ENCODE measurements at regions of chr2 and their contacts with region 1.

Region 1: DNA sequence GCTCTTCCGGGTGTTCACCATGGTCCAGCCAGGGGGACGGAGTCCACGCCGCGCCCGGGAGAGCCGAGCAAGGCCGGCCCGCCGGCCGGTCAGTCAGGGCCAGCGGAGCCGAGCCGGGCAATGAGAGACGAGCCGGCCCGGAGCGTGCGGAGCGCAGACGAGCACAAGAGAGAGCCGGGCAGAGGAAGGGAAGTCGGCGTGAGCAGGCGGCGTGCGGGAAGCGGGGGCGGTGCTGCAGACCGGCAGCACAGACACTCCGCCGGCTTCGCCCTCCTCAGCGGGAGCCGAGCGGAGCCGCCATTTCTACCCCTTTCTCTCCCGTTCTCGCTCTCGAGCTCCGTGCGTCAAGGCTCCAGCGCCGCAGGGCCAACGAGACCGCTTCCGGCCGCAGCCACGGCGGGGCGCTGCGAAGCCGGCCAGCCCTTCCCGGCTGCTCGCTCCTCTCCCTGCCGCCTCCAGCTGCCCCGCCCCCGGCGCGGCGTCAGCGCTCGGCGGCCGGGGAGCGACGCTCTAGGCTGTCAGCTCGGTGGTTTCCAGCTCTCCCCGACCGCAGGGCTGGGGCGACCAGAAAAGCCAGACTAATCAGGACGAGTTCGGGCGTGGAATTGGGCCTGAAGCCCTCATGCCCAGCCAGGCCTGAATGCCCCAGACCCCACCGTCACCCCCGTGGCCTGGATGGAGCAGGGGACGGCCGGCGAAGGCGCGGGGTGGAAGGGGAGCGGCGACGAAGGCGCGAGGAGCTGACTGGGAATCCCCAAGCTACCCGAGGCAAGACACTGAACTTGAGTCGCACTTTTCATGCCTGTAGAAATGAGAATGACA is at the start of gene ATAD2B:
- DNase-seq: peak; percentile 89
- ATAC-seq: peak; percentile 83
- H3K4me3 ChIP-seq: peak within 1 kb of the TSS; percentile 89
- H3K27ac ChIP-seq: peak within 1 kb of the TSS; percentile 99
- H3K4me1 ChIP-seq: peaks cover 9% of the 10 kb centered on the region
- H3K27me3 ChIP-seq: no peaks in the 10 kb centered on the region
- CTCF ChIP-seq: peak; percentile 80 to 93 (median 93); a peak in 5 of 6 replicates
- EP300 ChIP-seq: peak; percentile 13 to 14; a peak in 1 of 4 replicates
- POLR2A ChIP-seq: peak; percentile 94
- RAD21 ChIP-seq: peak; percentile 68
- polyA plus RNA-seq, gene ATAD2B: 3.6 to 5.4 TPM

Region 2: GRCh38 chr2:23301136-23301535 is 625.8 kb before region 1 on chr2:
- CTCF ChIA-PET with region 1: no interaction called
- POLR2A ChIA-PET with region 1: no interaction called
- RAD21 ChIA-PET with region 1: no interaction called
- SMC1A ChIA-PET with region 1: no interaction called
- in situ Hi-C with region 1: no loop called
- intact Hi-C with region 1: no loop called
- DNase-seq: no peak
- ATAC-seq: no peak
- H3K4me3 ChIP-seq: no peak overlapping the region
- H3K27ac ChIP-seq: no peak overlapping the region
- H3K4me1 ChIP-seq: no peaks in the 10 kb centered on the region
- H3K27me3 ChIP-seq: peaks cover 4 to 6% of the 10 kb centered on the region in 2 experiments; a peak in 2 of 4 replicates
- CTCF ChIP-seq: no peak
- EP300 ChIP-seq: no peak
- POLR2A ChIP-seq: no peak
- RAD21 ChIP-seq: no peak

Region 3: GRCh38 chr2:23850564-23851256 is 76.3 kb before region 1 on chr2:
- CTCF ChIA-PET with region 1: interaction called, 14 read pairs
- POLR2A ChIA-PET with region 1: interaction called, 8 read pairs
- RAD21 ChIA-PET with region 1: interaction called, 18 read pairs
- SMC1A ChIA-PET with region 1: interaction called, 17 read pairs
- in situ Hi-C with region 1: no loop called
- intact Hi-C with region 1: no loop called
- DNase-seq: peak; percentile 53
- ATAC-seq: peak; percentile 97
- H3K4me3 ChIP-seq: no peak overlapping the region; the same call in 1 of the 2 replicates
- H3K27ac ChIP-seq: peak overlapping the region; percentile 87
- H3K4me1 ChIP-seq: peaks cover 29% of the 10 kb centered on the region
- H3K27me3 ChIP-seq: no peaks in the 10 kb centered on the region
- CTCF ChIP-seq: no peak
- EP300 ChIP-seq: peak in 1 of 2 experiments; percentile 81; a peak in 2 of 4 replicates
- POLR2A ChIP-seq: no peak
- RAD21 ChIP-seq: no peak

Region 4: DNA sequence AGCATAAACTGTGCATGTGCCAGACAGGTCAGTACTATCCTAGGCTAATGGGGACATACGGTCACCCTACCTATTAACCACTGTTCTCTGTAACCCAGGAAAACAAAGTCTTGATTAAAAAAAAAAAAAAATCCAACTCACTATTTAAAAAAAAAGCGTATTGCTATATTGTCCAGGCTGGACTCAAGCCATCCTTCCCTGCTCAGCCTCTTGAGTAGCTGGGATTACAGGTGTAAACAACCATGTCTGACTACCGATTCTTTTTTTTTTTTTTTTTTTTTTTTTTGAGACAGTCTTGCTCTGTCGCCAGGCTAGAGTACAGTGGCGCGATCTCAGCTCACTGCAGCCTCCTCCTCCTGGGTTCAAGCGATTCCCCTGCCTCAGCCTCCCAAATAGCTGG is 11.6 kb before region 1 on chr2:
- CTCF ChIA-PET with region 1: interaction called, 5 read pairs
- POLR2A ChIA-PET with region 1: interaction called, 5 read pairs
- RAD21 ChIA-PET with region 1: interaction called, 10 read pairs
- SMC1A ChIA-PET with region 1: interaction called, 5 read pairs
- in situ Hi-C with region 1: no loop called
- intact Hi-C with region 1: no loop called
- DNase-seq: no peak
- ATAC-seq: no peak
- H3K4me3 ChIP-seq: no peak overlapping the region
- H3K27ac ChIP-seq: no peak overlapping the region
- H3K4me1 ChIP-seq: peaks cover 7% of the 10 kb centered on the region
- H3K27me3 ChIP-seq: no peaks in the 10 kb centered on the region
- CTCF ChIP-seq: no peak
- EP300 ChIP-seq: no peak
- POLR2A ChIP-seq: no peak
- RAD21 ChIP-seq: no peak

Region 5: GRCh38 chr2:24046930-24047702 is 120.2 kb after region 1 on chr2 and contains the start of gene WDCP:
- CTCF ChIA-PET with region 1: interaction called, 26 read pairs
- POLR2A ChIA-PET with region 1: interaction called, 9 read pairs
- RAD21 ChIA-PET with region 1: interaction called, 31 read pairs
- SMC1A ChIA-PET with region 1: interaction called, 14 read pairs
- in situ Hi-C with region 1: no loop called
- intact Hi-C with region 1: loop called (anchors 5 kb)
- DNase-seq: peak; percentile 97
- ATAC-seq: peak; percentile 100
- H3K4me3 ChIP-seq: peak within 1 kb of the TSS; percentile 78
- H3K27ac ChIP-seq: peak within 1 kb of the TSS; percentile 20; the same call in 1 of the 2 replicates
- H3K4me1 ChIP-seq: peaks cover 11% of the 10 kb centered on the region
- H3K27me3 ChIP-seq: peaks cover 0 to 5% of the 10 kb centered on the region in 2 experiments; a peak in 3 of 4 replicates
- CTCF ChIP-seq: no peak
- EP300 ChIP-seq: no peak
- POLR2A ChIP-seq: peak; percentile 94
- RAD21 ChIP-seq: no peak
- polyA plus RNA-seq, gene WDCP: 5.5 to 6.1 TPM

Region 6: GRCh38 chr2:24075915-24076848 is 149.2 kb after region 1 on chr2 and contains the start of gene SF3B6:
- CTCF ChIA-PET with region 1: interaction called, 34 read pairs
- POLR2A ChIA-PET with region 1: interaction called, 16 read pairs
- RAD21 ChIA-PET with region 1: interaction called, 45 read pairs
- SMC1A ChIA-PET with region 1: interaction called, 24 read pairs
- in situ Hi-C with region 1: no loop called
- intact Hi-C with region 1: loop called (anchors 2 kb)
- DNase-seq: peak; percentile 98
- ATAC-seq: peak; percentile 95
- H3K4me3 ChIP-seq: peak within 1 kb of the TSS; percentile 89
- H3K27ac ChIP-seq: peak within 1 kb of the TSS; percentile 85
- H3K4me1 ChIP-seq: peaks cover 9% of the 10 kb centered on the region
- H3K27me3 ChIP-seq: no peaks in the 10 kb centered on the region
- CTCF ChIP-seq: no peak
- EP300 ChIP-seq: peak in 1 of 2 experiments; percentile 27; a peak in 1 of 4 replicates
- POLR2A ChIP-seq: peak; percentile 94
- RAD21 ChIP-seq: no peak
- polyA plus RNA-seq, gene SF3B6: 538 to 584 TPM

Region 7: DNA sequence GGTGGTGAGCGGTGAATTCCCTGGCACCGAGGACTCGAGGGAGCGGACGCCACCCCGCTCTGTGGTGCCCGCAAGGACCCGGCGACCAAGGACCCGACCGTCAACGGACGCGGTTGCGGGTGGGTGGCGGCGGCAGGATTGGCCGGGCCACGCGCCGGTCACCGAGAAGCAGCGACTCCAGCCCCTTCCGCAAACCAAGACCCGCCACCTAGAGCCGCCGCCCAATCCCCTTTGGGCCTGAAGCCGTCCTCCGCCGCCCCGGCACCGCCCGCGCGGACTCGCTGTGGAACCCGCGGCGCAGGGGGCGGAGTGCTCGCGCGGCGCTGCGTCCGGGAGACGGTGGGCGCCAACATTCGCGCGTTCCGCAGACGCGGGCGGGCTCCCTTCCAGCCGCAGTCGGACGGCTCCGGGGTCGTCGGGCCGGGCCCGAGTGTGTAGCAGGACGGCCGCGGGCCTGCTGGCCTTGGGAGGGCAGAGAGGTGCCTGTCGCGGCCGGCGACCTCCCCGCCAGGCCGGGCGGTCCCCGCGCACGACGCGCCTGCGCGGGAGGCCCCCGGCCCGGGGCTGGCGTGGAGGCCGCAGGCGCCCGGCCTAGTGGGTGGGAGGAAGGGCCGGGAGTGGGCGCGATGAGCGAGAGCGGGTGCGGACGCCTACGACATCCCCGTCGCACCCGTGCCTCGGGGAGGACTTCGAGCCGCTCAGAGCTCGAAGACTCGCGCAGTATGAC is 196.4 kb after region 1 on chr2 and contains the starts of genes FAM228B and PFN4:
- CTCF ChIA-PET with region 1: interaction called, 3 read pairs
- POLR2A ChIA-PET with region 1: interaction called, 5 read pairs
- RAD21 ChIA-PET with region 1: interaction called, 8 read pairs
- SMC1A ChIA-PET with region 1: interaction called, 5 read pairs
- in situ Hi-C with region 1: no loop called
- intact Hi-C with region 1: loop called (anchors 2 kb)
- DNase-seq: peak; percentile 41
- ATAC-seq: peak; percentile 98
- H3K4me3 ChIP-seq: peak within 1 kb of the TSS; percentile 82
- H3K27ac ChIP-seq: peak within 1 kb of the TSS; percentile 90
- H3K4me1 ChIP-seq: no peaks in the 10 kb centered on the region
- H3K27me3 ChIP-seq: no peaks in the 10 kb centered on the region
- CTCF ChIP-seq: no peak
- EP300 ChIP-seq: no peak
- POLR2A ChIP-seq: peak; percentile 95
- RAD21 ChIP-seq: no peak
- polyA plus RNA-seq, gene FAM228B: 5.1 to 5.8 TPM
- polyA plus RNA-seq, gene PFN4: 0.14 to 0.38 TPM

Region 8: GRCh38 chr2:24342110-24342910 is 415.3 kb after region 1 on chr2:
- CTCF ChIA-PET with region 1: interaction called, 7 read pairs
- POLR2A ChIA-PET with region 1: no interaction called
- RAD21 ChIA-PET with region 1: interaction called, 18 read pairs
- SMC1A ChIA-PET with region 1: no interaction called
- in situ Hi-C with region 1: no loop called
- intact Hi-C with region 1: no loop called
- DNase-seq: peak; percentile 68
- ATAC-seq: peak; percentile 81
- H3K4me3 ChIP-seq: peak overlapping the region; percentile 9; the same call in 1 of the 2 replicates
- H3K27ac ChIP-seq: peak overlapping the region; percentile 71
- H3K4me1 ChIP-seq: peaks cover 40% of the 10 kb centered on the region
- H3K27me3 ChIP-seq: no peaks in the 10 kb centered on the region
- CTCF ChIP-seq: peak in 2 of 3 experiments; percentile 12 to 40; a peak in 2 of 6 replicates
- EP300 ChIP-seq: peak in 1 of 2 experiments; percentile 22; a peak in 1 of 4 replicates
- POLR2A ChIP-seq: peak; percentile 50; the same call in 1 of the 2 replicates
- RAD21 ChIP-seq: peak; percentile 47; the same call in 1 of the 2 replicates